Sigmoid colon (tissue), 7 donors: ENCODE measurements at regions of chr2 and their contacts with region 1.

Region 1: DNA sequence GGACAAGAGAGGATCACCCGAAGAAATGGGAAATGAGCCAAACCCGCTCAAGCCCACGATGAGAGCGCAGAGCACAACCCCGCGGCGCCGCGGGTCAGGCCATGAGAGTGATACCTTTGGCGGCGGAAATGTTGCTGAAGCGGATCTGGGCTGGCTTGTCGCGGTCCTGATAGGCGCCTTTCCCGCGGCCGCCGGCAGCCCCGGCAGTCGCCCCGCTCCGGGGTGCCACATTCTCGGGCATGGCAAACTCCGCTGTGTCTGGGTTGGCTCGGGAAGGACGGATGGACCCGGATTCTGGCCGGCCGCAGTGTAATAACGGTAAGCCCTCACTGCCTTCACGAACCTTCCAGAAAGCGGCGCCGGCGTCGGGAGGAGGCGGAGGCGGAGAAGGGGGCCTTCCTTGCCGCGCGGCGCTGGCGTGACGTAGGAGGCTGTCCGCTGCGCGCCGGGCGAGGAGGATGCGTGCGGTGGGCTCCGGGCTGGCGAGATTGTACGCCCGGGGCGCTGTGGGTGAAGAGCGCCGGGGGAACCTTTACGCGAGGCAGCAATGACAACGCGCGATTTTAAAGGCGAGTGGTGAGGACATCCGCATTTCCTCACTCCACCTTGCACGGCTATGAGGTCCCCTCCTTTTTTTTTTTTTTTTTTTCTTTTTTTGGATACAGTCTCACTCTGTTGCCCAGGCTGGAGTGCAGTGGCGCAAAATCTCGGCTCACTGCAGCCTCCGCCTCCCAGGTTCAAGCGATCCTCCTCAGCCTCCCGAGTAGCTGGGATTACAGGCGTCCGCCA is at the start of gene CCT4:
- DNase-seq: peak; percentile 93
- H3K4me3 ChIP-seq: peak within 1 kb of the TSS; percentile 75 to 87 (median 82)
- H3K27ac ChIP-seq: peak within 1 kb of the TSS; percentile 94 to 96 (median 96)
- H3K4me1 ChIP-seq: peaks cover 0 to 23% (median 17%) of the 10 kb centered on the region in 4 donors
- H3K27me3 ChIP-seq: no peaks in the 10 kb centered on the region
- CTCF ChIP-seq: no peak
- EP300 ChIP-seq: peak in 1 of 4 donors; percentile 86
- POLR2A ChIP-seq: peak; percentile 71
- total RNA-seq, gene CCT4: 75.8 to 111 (median 97.9) TPM

Region 2: GRCh38 chr2:61854474-61855182 is 33.8 kb before region 1 on chr2:
- intact Hi-C with region 1: loop called (anchors 1 kb)
- DNase-seq: peak; percentile 95
- H3K4me3 ChIP-seq: peak overlapping the region; percentile 66 to 87 (median 77)
- H3K27ac ChIP-seq: peak overlapping the region; percentile 88 to 91 (median 90)
- H3K4me1 ChIP-seq: peaks cover 0 to 14% (median 13%) of the 10 kb centered on the region in 4 donors
- H3K27me3 ChIP-seq: no peaks in the 10 kb centered on the region
- CTCF ChIP-seq: no peak
- EP300 ChIP-seq: no peak
- POLR2A ChIP-seq: no peak